Activated CD4-positive, alpha-beta memory T cell treated with anti-CD3 and anti-CD28 coated beads for 36 hours (primary cell): ENCODE measurements at regions of chr3 and their contacts with region 1.

Region 1: GRCh38 chr3:102129760-102130608 is 280.7 kb downstream of the NFKBIZ start:
- DNase-seq: no peak
- H3K4me3 Mint-ChIP-seq: no peak overlapping the region
- H3K27ac Mint-ChIP-seq: no peak overlapping the region
- H3K4me1 Mint-ChIP-seq: peaks cover 16% of the 10 kb centered on the region
- H3K27me3 Mint-ChIP-seq: no peaks in the 10 kb centered on the region

Region 2: GRCh38 chr3:102113411-102114041 is 16.5 kb before region 1 on chr3:
- CTCF ChIA-PET with region 1: no interaction called
- POLR2A ChIA-PET with region 1: no interaction called
- intact Hi-C with region 1: loop called (anchors 1 kb)
- DNase-seq: peak; percentile 19
- H3K4me3 Mint-ChIP-seq: no peak overlapping the region
- H3K27ac Mint-ChIP-seq: peak overlapping the region; percentile 72
- H3K4me1 Mint-ChIP-seq: peaks cover 33% of the 10 kb centered on the region
- H3K27me3 Mint-ChIP-seq: no peaks in the 10 kb centered on the region

Region 3: GRCh38 chr3:102156426-102156825 is 26.4 kb after region 1 on chr3:
- CTCF ChIA-PET with region 1: no interaction called
- POLR2A ChIA-PET with region 1: no interaction called
- intact Hi-C with region 1: no loop called
- DNase-seq: no peak
- H3K4me3 Mint-ChIP-seq: no peak overlapping the region
- H3K27ac Mint-ChIP-seq: no peak overlapping the region
- H3K4me1 Mint-ChIP-seq: peaks cover 14% of the 10 kb centered on the region
- H3K27me3 Mint-ChIP-seq: no peaks in the 10 kb centered on the region

Region 4: GRCh38 chr3:102235679-102236078 is 105.7 kb after region 1 on chr3:
- CTCF ChIA-PET with region 1: no interaction called
- POLR2A ChIA-PET with region 1: no interaction called
- intact Hi-C with region 1: no loop called
- DNase-seq: no peak
- H3K4me3 Mint-ChIP-seq: no peak overlapping the region
- H3K27ac Mint-ChIP-seq: no peak overlapping the region
- H3K4me1 Mint-ChIP-seq: no peaks in the 10 kb centered on the region
- H3K27me3 Mint-ChIP-seq: no peaks in the 10 kb centered on the region

Region 5: GRCh38 chr3:102682741-102683140 is 552.8 kb after region 1 on chr3:
- CTCF ChIA-PET with region 1: no interaction called
- POLR2A ChIA-PET with region 1: no interaction called
- intact Hi-C with region 1: no loop called
- DNase-seq: no peak
- H3K4me3 Mint-ChIP-seq: no peak overlapping the region
- H3K27ac Mint-ChIP-seq: no peak overlapping the region
- H3K4me1 Mint-ChIP-seq: no peaks in the 10 kb centered on the region
- H3K27me3 Mint-ChIP-seq: peaks cover 13% of the 10 kb centered on the region